MCF 10A (cell line): ENCODE measurements at regions of chr20 and their contacts with region 1.

Region 1: GRCh38 chr20:63627129-63627750 is 339 bp upstream of the GMEB2 start:
- DNase-seq: peak; percentile 93
- H3K4me3 Mint-ChIP-seq: peak overlapping the region; percentile 79
- H3K27ac Mint-ChIP-seq: peak overlapping the region; percentile 88
- H3K4me1 Mint-ChIP-seq: peaks cover 7% of the 10 kb centered on the region
- H3K27me3 Mint-ChIP-seq: no peaks in the 10 kb centered on the region
- CTCF ChIP-seq: no peak

Region 2: DNA sequence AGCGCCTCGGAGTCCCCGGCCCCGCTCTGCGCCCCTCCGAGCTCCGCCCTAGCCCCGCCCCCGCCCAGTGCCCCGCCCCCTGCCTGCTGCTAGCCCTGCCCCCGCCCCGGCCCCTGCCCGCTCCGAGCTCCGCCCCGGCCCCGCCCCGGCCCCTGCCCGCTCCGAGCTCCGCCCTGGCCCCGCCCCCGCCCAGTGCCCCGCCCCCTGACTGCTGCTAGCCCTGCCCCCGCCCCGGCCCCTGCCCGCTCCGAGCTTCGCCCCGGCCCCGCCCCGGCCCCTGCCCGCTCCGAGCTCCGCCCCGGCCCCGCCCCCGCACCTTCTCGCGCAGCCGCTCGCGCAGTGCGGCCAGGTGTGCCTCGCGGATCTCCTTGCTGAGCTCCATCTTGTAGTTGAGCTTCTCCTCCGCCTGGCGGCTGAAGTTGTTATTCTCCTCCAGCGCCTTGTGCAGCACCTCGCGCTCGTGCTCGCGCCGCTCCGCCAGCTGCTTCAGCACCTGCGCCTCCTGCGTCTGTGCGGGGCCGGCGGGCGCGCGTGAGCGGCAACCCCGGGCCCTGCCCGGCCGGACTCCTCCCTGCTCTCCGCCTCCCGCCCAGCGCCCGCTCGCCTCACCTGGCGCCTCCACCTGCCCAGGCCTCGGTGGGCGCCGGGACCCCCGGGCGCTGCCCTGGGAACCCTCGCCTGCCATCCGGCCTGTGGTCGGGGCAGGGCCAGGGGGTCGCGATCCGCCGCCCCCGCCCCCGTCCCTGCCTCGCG is 14.7 kb after region 1 on chr20:
- CTCF ChIA-PET with region 1: interaction called, 9 read pairs
- POLR2A ChIA-PET with region 1: interaction called, 24 read pairs
- intact Hi-C with region 1: no loop called
- DNase-seq: peak; percentile 82
- H3K4me3 Mint-ChIP-seq: peak overlapping the region; percentile 74
- H3K27ac Mint-ChIP-seq: no peak overlapping the region
- H3K4me1 Mint-ChIP-seq: peaks cover 6% of the 10 kb centered on the region
- H3K27me3 Mint-ChIP-seq: no peaks in the 10 kb centered on the region
- CTCF ChIP-seq: peak; percentile 39

Region 3: GRCh38 chr20:63686492-63687321 is 59.5 kb after region 1 on chr20:
- CTCF ChIA-PET with region 1: no interaction called
- POLR2A ChIA-PET with region 1: interaction called, 6 read pairs
- intact Hi-C with region 1: loop called (anchors 1 kb)
- DNase-seq: peak; percentile 85
- H3K4me3 Mint-ChIP-seq: no peak overlapping the region
- H3K27ac Mint-ChIP-seq: no peak overlapping the region
- H3K4me1 Mint-ChIP-seq: peaks cover 12% of the 10 kb centered on the region
- H3K27me3 Mint-ChIP-seq: no peaks in the 10 kb centered on the region
- CTCF ChIP-seq: no peak

Region 4: GRCh38 chr20:63739130-63740069 is 112.2 kb after region 1 on chr20 and contains the start of gene SLC2A4RG:
- CTCF ChIA-PET with region 1: no interaction called
- POLR2A ChIA-PET with region 1: interaction called, 15 read pairs
- intact Hi-C with region 1: no loop called
- DNase-seq: peak; percentile 76
- H3K4me3 Mint-ChIP-seq: peak within 1 kb of the TSS; percentile 74
- H3K27ac Mint-ChIP-seq: no peak within 1 kb of the TSS
- H3K4me1 Mint-ChIP-seq: no peaks in the 10 kb centered on the region
- H3K27me3 Mint-ChIP-seq: no peaks in the 10 kb centered on the region
- CTCF ChIP-seq: no peak
- total RNA-seq, gene SLC2A4RG: 85.0 and 105 TPM in 2 replicates